GM12878 (cell line): ENCODE measurements at regions of chr6 and their contacts with region 1.

Region 1: GRCh38 chr6:33585403-33586107 is 5.5 kb upstream of the BAK1 start:
- DNase-seq: peak; percentile 70
- ATAC-seq: peak; percentile 82
- H3K4me3 ChIP-seq: no peak overlapping the region; the same call in 1 of the 2 replicates
- H3K27ac ChIP-seq: peak overlapping the region; percentile 1; the same call in 1 of the 2 replicates
- H3K4me1 ChIP-seq: peaks cover 23% of the 10 kb centered on the region
- H3K27me3 ChIP-seq: no peaks in the 10 kb centered on the region
- CTCF ChIP-seq: peak; percentile 87 to 95 (median 95)
- EP300 ChIP-seq: no peak
- POLR2A ChIP-seq: peak; percentile 48; the same call in 1 of the 2 replicates
- RAD21 ChIP-seq: peak; percentile 85

Region 2: GRCh38 chr6:33147807-33148666 is 437.5 kb before region 1 on chr6:
- CTCF ChIA-PET with region 1: no interaction called
- POLR2A ChIA-PET with region 1: no interaction called
- RAD21 ChIA-PET with region 1: no interaction called
- SMC1A ChIA-PET with region 1: no interaction called
- in situ Hi-C with region 1: no loop called
- intact Hi-C with region 1: no loop called
- DNase-seq: no peak
- ATAC-seq: no peak
- H3K4me3 ChIP-seq: no peak overlapping the region
- H3K27ac ChIP-seq: no peak overlapping the region
- H3K4me1 ChIP-seq: peaks cover 3% of the 10 kb centered on the region; the same call in 1 of the 2 replicates
- H3K27me3 ChIP-seq: peaks cover 0 to 2% of the 10 kb centered on the region in 2 experiments; a peak in 2 of 4 replicates
- CTCF ChIP-seq: peak; percentile 69 to 82 (median 81)
- EP300 ChIP-seq: no peak
- POLR2A ChIP-seq: no peak
- RAD21 ChIP-seq: peak; percentile 93

Region 3: GRCh38 chr6:33535104-33535603 is 50.4 kb before region 1 on chr6:
- CTCF ChIA-PET with region 1: no interaction called
- POLR2A ChIA-PET with region 1: no interaction called
- RAD21 ChIA-PET with region 1: no interaction called
- SMC1A ChIA-PET with region 1: no interaction called
- in situ Hi-C with region 1: no loop called
- intact Hi-C with region 1: no loop called
- DNase-seq: no peak
- ATAC-seq: no peak
- H3K4me3 ChIP-seq: no peak overlapping the region
- H3K27ac ChIP-seq: no peak overlapping the region
- H3K4me1 ChIP-seq: no peaks in the 10 kb centered on the region
- H3K27me3 ChIP-seq: no peaks in the 10 kb centered on the region
- CTCF ChIP-seq: peak in 1 of 3 experiments; percentile 11; a peak in 1 of 6 replicates
- EP300 ChIP-seq: no peak
- POLR2A ChIP-seq: no peak
- RAD21 ChIP-seq: no peak

Region 4: DNA sequence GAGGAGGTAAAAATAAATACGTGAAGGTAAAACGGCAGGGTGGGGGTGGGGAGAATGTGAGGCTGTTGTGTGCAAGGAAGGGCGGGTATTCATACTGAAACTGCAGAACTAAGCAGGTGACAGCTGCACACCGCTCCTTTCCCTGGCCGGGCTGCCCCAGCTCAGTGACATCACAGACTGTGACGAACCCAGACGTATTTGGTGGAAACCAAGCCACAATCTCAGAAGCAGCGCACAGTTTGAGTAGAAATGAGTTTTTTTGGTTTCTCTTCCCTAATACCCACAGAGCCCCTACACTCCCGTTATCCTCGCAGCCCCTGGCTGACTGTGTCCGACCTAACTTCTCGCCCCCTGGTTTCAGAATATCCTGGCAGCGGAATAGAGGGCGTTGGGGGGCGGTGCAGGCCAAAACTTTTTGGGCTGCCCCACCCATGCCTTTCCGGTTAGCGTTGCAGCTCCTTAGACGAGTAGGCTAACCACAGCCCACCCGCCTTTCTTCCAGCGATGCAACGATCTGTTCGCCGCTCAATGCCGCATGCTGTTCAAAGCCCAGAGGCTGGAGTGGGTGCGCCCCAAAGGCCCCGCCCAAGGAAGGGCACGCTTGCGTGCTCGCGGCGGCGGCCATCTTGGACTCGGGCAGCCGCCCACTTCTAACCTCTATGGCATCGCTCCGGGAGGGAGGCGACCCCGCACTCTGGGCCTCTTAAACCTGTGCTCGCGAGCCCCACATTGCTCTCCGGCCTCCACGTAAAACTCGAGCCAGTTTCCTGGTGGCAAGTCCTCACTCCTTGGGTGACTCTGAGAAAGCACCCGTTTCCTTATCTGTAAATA is 14.5 kb before region 1 on chr6:
- CTCF ChIA-PET with region 1: interaction called, 10 read pairs
- POLR2A ChIA-PET with region 1: interaction called, 26 read pairs
- RAD21 ChIA-PET with region 1: interaction called, 13 read pairs
- SMC1A ChIA-PET with region 1: interaction called, 7 read pairs
- in situ Hi-C with region 1: no loop called
- intact Hi-C with region 1: no loop called
- DNase-seq: peak; percentile 96
- ATAC-seq: peak; percentile 90
- H3K4me3 ChIP-seq: peak overlapping the region; percentile 67
- H3K27ac ChIP-seq: peak overlapping the region; percentile 98
- H3K4me1 ChIP-seq: peaks cover 18% of the 10 kb centered on the region
- H3K27me3 ChIP-seq: no peaks in the 10 kb centered on the region
- CTCF ChIP-seq: no peak
- EP300 ChIP-seq: peak; percentile 98 to 99
- POLR2A ChIP-seq: peak; percentile 93
- RAD21 ChIP-seq: no peak; the same call in 1 of the 2 replicates

Region 5: GRCh38 chr6:33607784-33608161 is 22.2 kb after region 1 on chr6:
- CTCF ChIA-PET with region 1: interaction called, 235 read pairs
- POLR2A ChIA-PET with region 1: interaction called, 6 read pairs
- RAD21 ChIA-PET with region 1: interaction called, 86 read pairs
- SMC1A ChIA-PET with region 1: interaction called, 122 read pairs
- in situ Hi-C with region 1: no loop called
- intact Hi-C with region 1: loop called (anchors 1 kb)
- DNase-seq: no peak
- ATAC-seq: peak; percentile 95
- H3K4me3 ChIP-seq: no peak overlapping the region
- H3K27ac ChIP-seq: no peak overlapping the region
- H3K4me1 ChIP-seq: no peaks in the 10 kb centered on the region
- H3K27me3 ChIP-seq: no peaks in the 10 kb centered on the region; a peak in 1 of 4 replicates
- CTCF ChIP-seq: peak; percentile 68 to 71 (median 69)
- EP300 ChIP-seq: no peak
- POLR2A ChIP-seq: no peak
- RAD21 ChIP-seq: peak; percentile 59

Region 6: DNA sequence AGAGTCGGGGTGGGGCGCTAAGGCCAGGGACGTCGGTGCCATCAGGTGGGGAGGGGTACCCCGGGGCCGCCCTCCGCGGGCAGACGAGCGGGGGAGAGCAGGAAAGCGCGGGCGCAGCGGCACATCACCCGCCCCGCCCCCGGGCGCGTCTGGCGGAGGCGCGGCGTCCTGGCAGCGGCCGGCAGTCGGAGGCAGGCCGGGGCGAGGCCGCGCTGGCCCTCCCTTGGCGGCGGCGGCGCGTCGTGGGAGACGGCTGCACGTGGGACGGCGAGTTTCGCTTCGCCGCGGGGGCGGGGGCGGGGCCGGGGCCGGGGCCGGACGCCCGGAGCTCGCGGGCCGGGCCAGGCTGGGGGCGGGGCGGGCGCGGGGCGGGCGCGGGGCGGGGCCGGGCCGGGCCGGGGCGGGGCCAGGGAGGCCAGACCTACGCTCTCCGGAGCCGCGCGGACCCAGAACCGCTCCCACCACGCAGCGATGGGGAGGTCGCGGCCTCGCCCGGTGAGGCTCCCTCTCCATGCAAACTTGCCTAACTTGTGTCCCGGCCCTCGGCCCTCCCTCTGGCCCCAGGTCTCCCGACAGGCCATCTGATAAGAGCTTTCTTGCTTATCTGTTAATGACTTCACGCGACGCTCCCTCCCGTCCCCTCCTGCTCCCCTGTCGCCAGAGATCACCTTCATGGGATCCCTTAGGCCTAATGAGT is 48.1 kb after region 1 on chr6:
- CTCF ChIA-PET with region 1: interaction called, 10 read pairs
- POLR2A ChIA-PET with region 1: no interaction called
- RAD21 ChIA-PET with region 1: interaction called, 3 read pairs
- SMC1A ChIA-PET with region 1: interaction called, 4 read pairs
- in situ Hi-C with region 1: no loop called
- intact Hi-C with region 1: loop called (anchors 2 kb)
- DNase-seq: no peak
- ATAC-seq: peak; percentile 85
- H3K4me3 ChIP-seq: peak overlapping the region; percentile 70
- H3K27ac ChIP-seq: no peak overlapping the region
- H3K4me1 ChIP-seq: peaks cover 12% of the 10 kb centered on the region
- H3K27me3 ChIP-seq: no peaks in the 10 kb centered on the region
- CTCF ChIP-seq: no peak
- EP300 ChIP-seq: no peak
- POLR2A ChIP-seq: 0 out of 2 replicates have a peak, but pooled peaks have one; percentile 38
- RAD21 ChIP-seq: no peak

Region 7: DNA sequence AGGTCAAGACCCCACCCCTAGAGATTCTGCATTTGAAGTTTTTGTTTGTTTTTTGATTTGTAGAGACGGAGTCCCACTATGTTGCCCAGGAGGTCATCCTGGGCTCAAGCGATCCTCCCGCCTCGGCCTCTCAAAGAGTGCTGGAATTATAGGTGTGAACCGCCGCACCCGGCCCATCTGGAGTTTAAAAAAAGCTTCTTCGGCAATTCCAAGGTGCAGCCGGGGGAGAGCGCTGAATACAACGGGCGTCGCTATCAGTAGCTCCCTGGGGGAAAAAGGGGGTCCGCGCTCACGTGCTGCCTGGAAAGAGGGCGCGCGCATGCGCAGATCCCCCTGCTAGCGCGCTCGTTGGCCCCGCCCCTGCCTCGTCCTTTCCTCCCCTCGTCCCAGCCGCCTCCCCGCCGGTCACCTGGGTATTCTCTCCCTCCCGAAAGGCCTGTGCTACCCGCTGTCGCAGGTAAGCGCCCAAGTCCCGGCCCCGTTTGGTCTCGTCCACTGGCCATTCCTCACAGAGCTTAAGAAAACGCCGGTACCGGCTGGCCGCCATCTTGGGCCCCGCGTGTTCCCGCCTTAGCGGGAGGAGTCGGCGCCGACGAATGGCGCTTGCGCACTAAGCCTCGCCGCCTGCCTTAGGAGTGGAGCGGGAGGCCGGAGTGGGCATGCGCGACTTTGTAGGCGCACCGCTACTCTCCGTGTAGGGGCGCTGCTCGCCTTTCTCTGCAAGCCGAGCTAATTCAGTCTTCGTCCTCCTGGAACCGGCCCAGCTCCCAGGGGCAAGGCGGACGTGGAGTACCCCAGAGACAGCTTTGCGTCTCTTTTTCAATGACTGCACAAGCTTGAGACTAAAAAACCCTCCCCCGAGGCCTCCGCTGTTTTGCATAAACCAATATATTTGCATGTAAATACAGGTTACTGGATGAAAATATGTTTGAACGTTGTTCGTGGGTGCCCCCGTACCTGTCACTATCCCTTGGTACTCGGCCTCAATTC is 125.9 kb after region 1 on chr6 and contains the start of gene UQCC2:
- CTCF ChIA-PET with region 1: interaction called, 21 read pairs
- POLR2A ChIA-PET with region 1: interaction called, 3 read pairs
- RAD21 ChIA-PET with region 1: interaction called, 9 read pairs
- SMC1A ChIA-PET with region 1: interaction called, 17 read pairs
- in situ Hi-C with region 1: no loop called
- intact Hi-C with region 1: no loop called
- DNase-seq: peak; percentile 84
- ATAC-seq: peak; percentile 97
- H3K4me3 ChIP-seq: peak within 1 kb of the TSS; percentile 83
- H3K27ac ChIP-seq: peak within 1 kb of the TSS; percentile 98
- H3K4me1 ChIP-seq: peaks cover 28% of the 10 kb centered on the region
- H3K27me3 ChIP-seq: no peaks in the 10 kb centered on the region
- CTCF ChIP-seq: peak; percentile 66 to 87 (median 68)
- EP300 ChIP-seq: no peak
- POLR2A ChIP-seq: peak; percentile 93
- RAD21 ChIP-seq: peak; percentile 64
- polyA plus RNA-seq, gene UQCC2: 433 to 478 TPM

Region 8: GRCh38 chr6:33761922-33762629 is 176.5 kb after region 1 on chr6:
- CTCF ChIA-PET with region 1: interaction called, 15 read pairs
- POLR2A ChIA-PET with region 1: no interaction called
- RAD21 ChIA-PET with region 1: interaction called, 3 read pairs
- SMC1A ChIA-PET with region 1: no interaction called
- in situ Hi-C with region 1: no loop called
- intact Hi-C with region 1: no loop called
- DNase-seq: no peak
- ATAC-seq: peak; percentile 90
- H3K4me3 ChIP-seq: no peak overlapping the region
- H3K27ac ChIP-seq: no peak overlapping the region
- H3K4me1 ChIP-seq: no peaks in the 10 kb centered on the region
- H3K27me3 ChIP-seq: no peaks in the 10 kb centered on the region; a peak in 1 of 4 replicates
- CTCF ChIP-seq: peak; percentile 68 to 71 (median 68)
- EP300 ChIP-seq: no peak
- POLR2A ChIP-seq: no peak
- RAD21 ChIP-seq: peak; percentile 56